ENCODE measurements at regions of chr1 and their contacts with region 1.

Region 1: DNA sequence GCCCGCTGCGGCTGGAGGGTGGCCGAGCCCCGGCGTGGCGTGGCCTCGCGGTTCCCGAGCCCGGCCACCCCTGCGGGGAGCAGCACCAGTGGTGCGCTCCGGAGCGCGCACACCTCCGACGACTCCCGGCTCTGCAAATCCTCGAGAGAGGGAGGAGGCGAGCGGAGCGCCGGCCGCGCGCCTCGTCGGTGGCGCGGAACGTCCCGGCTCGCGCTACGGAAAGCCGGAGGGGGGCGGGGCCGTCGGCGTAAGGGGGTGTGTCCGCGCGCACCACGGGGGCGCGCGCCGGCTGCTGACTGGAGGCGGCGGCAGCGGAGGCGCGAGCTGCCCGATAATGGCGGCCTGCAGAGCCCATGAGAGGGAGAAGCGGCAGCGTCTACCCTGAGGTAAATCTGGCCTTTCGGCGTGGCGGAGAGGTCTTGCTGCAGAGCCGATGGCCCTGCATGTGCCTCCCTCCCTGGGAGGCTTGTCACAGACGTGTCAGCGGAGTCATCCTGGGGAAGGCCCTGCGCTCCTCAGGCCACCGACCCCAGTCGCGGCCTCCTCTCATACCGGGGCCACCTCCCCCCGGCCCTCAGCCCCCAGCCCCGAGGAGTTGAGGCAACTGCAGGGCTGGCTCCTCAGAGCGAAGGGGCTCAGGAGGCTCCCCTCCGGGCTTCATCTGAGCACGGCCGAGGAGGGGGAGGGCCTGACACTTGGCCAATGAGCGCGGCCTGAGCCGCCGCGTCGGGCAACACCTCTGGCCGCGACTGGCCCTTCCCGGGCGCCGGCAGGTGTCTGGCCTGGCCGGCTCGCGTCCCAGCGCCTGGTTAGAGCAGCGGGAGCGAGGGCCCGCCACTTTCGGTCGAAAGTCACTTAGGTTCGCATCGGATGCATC is at the start of gene PDIK1L:
- DNase-seq: peak; percentile 93
- H3K4me3 ChIP-seq: peak within 1 kb of the TSS; percentile 94 to 100
- H3K27ac ChIP-seq: peak within 1 kb of the TSS; percentile 89 to 90
- H3K4me1 ChIP-seq: peaks cover 7% of the 10 kb centered on the region
- H3K27me3 ChIP-seq: no peaks in the 10 kb centered on the region
- CTCF ChIP-seq: peak in 2 of 3 experiments; percentile 16 to 19
- POLR2A ChIP-seq: peak; percentile 37
- total RNA-seq, gene PDIK1L: 9.9 to 11.7 TPM

Region 2: GRCh38 chr1:26169669-26170471 is 58.1 kb after region 1 on chr1 and contains the start of gene ZNF593:
- intact Hi-C with region 1: loop called (anchors 10 kb)
- DNase-seq: peak; percentile 96
- H3K4me3 ChIP-seq: peak within 1 kb of the TSS; percentile 71 to 91
- H3K27ac ChIP-seq: peak within 1 kb of the TSS; percentile 31 to 71
- H3K4me1 ChIP-seq: peaks cover 12% of the 10 kb centered on the region
- H3K27me3 ChIP-seq: no peaks in the 10 kb centered on the region
- CTCF ChIP-seq: peak; percentile 90 to 99 (median 91)
- POLR2A ChIP-seq: no peak
- total RNA-seq, gene ZNF593: 37.3 to 56.7 TPM

Measured in testis (tissue), 5 donors.